ENCODE measurements at regions of chr9 and their contacts with region 1.

Region 1: DNA sequence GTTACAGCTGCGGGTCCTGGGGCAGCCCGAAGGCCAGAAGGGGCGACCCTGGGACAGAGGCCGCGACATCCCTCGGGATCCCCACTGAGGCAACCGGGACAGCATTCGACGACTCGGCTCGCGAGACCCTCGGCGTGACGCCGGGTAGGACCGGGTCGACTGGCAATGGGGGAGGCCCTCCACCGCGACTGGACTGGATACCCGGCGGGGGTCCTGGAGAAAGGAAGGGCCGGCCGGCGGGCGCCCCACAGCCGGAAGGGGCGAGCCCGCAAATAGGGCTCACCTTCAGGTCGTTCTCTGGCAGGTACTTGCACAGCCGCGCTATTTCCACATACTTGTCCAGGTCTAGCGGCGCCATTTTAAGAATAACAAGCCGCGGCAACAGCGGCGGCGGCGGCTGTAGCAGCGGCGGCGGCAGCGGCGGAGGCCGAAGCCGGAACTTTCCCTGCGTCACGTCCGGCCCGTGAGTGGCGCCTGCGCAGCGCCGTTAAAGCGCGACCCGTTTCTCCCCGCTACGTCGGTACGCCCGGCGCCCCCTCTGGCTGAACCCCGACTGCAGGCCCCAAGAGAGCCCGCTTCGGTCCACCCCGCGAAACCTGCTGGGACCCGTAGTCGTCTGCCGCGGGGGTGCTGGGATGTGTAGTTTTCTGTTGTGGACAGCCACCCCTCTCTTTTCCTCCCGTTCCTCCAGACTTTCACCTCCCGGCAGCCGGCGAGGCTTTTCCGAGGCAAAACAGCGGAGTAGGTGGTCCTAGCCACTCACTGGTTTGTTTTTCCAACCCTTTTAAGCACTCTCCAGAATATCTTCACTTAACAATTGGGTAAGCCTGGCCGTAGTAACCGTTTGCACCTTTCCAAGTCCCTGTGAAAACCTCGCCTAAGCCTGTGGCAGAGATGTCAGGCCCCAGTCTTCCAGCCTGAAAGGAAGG is at the start of gene PPP6C:
- DNase-seq: peak; percentile 99
- H3K4me3 Mint-ChIP-seq: peak within 1 kb of the TSS; percentile 97
- H3K27ac Mint-ChIP-seq: peak within 1 kb of the TSS; percentile 97
- H3K4me1 Mint-ChIP-seq: peaks cover 64% of the 10 kb centered on the region
- H3K27me3 Mint-ChIP-seq: no peaks in the 10 kb centered on the region
- total RNA-seq, gene PPP6C: 43.6 to 46.3 TPM

Region 2: DNA sequence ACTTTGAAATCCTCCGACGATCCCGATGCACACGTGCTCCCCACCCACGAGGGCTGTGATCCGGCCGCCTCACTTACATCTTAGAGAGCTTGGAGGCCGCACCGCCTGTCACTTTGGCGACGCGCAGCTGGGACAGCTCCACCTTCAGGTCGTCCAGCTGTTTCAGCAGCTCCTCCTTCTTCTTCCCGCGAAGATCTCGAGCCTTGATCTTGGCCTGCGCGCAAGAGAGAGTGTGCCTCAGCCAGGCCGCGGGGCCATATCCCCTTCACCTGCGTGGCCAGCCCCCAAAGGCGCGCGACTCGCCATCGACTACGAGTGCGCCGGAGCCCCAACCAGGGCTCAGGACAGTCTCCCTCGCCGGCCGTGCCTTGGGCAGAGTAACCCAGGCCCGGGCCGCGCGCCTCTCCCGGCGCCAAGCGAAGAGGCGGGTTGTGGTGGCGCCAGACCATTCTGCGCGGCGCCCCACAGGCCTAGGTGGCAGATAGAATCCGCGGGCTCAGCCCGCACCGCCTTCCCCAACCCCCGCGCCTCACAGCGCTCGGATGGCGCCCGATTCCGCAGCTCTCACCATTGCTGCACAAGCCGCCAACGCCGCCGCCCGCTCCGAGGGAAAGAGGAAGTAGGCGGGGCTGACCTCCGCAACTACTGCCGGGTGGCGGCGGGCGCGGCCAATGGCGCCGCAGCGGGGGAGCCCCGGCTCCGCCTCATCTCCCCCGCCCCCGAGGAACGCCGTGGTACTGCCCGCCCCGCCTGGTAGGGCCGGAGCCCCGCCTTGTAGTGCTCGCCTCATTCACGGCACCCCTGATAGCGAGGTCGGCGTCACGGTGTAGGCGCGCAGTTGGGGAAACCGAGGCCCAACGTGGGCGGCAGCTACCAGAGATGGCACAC is 328.0 kb before region 1 on chr9 and contains the starts of genes ARPC5L and RPL35:
- CTCF ChIA-PET with region 1: interaction called, 5 read pairs
- intact Hi-C with region 1: loop called (anchors 2 kb)
- DNase-seq: peak; percentile 96
- H3K4me3 Mint-ChIP-seq: peak within 1 kb of the TSS; percentile 87
- H3K27ac Mint-ChIP-seq: peak within 1 kb of the TSS; percentile 95
- H3K4me1 Mint-ChIP-seq: peaks cover 46% of the 10 kb centered on the region
- H3K27me3 Mint-ChIP-seq: no peaks in the 10 kb centered on the region
- total RNA-seq, gene ARPC5L: 116 to 123 TPM
- total RNA-seq, gene RPL35: 2,701 to 2,729 TPM

Region 3: DNA sequence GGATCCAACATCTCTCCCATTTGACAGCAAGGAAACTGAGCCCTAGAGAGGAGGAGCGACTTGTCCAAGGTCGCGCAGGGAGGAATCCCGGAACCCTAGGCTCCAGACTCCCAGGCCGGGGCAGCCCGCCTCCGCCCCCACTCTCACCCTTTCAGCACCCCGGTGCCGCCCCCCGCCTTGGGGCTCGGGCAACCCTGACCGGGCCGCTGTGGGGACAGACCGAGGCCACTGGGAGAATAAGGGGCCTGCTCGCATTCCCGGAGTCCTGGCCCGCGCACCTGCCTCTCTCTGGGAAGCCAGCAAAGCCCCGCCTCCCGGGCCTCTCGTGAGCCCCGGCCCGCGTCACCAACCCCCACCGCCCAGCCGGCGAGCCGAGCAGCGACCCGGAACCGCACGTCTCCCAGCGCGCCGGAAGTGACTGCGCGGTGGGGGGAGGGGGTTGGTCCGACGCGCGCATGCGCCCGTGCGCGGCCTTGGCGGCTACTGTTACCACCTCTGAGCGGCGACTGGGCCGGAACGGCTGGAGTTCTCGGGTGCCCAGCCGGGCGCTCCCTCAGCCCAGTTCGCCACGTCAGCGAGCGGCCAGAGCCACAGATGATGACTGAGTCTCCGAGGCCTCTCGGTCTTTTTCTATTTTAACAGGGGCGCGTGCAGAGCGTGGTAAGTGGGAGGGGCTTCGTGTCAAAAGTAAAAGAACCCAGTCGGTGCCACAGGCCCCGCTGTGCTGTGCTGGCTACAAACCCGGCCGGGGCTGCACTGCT is 248.8 kb before region 1 on chr9 and contains the start of gene GOLGA1:
- CTCF ChIA-PET with region 1: no interaction called
- intact Hi-C with region 1: loop called (anchors 2 kb)
- DNase-seq: peak; percentile 93
- H3K4me3 Mint-ChIP-seq: peak within 1 kb of the TSS; percentile 98
- H3K27ac Mint-ChIP-seq: peak within 1 kb of the TSS; percentile 98
- H3K4me1 Mint-ChIP-seq: peaks cover 22% of the 10 kb centered on the region
- H3K27me3 Mint-ChIP-seq: no peaks in the 10 kb centered on the region
- total RNA-seq, gene GOLGA1: 14.3 to 15.8 TPM

Region 4: DNA sequence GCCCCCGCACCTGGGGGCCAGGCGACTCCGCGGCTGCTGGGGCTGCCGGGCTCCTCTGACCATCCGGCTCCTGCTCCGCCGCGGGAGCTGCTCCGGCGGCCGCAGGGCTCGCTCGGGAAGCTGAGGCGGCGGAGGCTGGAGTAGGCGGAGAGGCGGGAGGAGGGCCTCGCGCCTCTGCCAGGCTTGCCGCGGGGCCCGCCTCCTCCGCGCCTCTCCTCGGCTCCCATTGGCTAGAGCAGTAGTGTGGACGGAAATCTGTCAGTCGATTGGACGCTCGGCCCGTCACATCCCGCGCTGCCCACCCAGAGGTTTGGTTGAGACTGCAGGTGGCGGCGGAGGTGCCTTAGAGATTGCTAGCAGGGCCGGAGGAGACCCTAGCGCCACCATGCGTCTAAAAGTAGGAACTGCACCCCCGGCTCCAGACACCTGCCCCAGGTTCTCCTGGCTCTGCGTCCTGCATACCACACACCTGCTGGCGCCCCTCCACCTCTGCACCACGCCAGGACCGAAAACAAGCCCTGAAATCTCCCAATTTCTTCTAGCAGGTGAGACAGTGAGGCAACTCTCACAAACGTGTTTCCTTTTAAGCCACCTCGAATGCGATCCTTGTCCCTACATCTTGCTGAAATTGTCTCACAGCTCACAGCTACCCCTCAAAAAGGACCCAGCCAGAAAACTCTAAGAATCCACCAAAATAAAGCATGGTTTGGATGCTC is 46.1 kb before region 1 on chr9 and contains the start of gene SCAI:
- CTCF ChIA-PET with region 1: interaction called, 3 read pairs
- intact Hi-C with region 1: loop called (anchors 2 kb)
- DNase-seq: peak; percentile 100
- H3K4me3 Mint-ChIP-seq: peak within 1 kb of the TSS; percentile 82
- H3K27ac Mint-ChIP-seq: peak within 1 kb of the TSS; percentile 58
- H3K4me1 Mint-ChIP-seq: peaks cover 40% of the 10 kb centered on the region
- H3K27me3 Mint-ChIP-seq: no peaks in the 10 kb centered on the region
- total RNA-seq, gene SCAI: 9.6 to 11.8 TPM

Region 5: GRCh38 chr9:125241000-125241862 is 51.6 kb after region 1 on chr9 and contains the start of gene HSPA5:
- CTCF ChIA-PET with region 1: no interaction called
- intact Hi-C with region 1: loop called (anchors 1 kb)
- DNase-seq: peak; percentile 100
- H3K4me3 Mint-ChIP-seq: peak within 1 kb of the TSS; percentile 95
- H3K27ac Mint-ChIP-seq: peak within 1 kb of the TSS; percentile 99
- H3K4me1 Mint-ChIP-seq: peaks cover 44% of the 10 kb centered on the region
- H3K27me3 Mint-ChIP-seq: peaks cover 2% of the 10 kb centered on the region
- total RNA-seq, gene HSPA5: 136 to 138 TPM

Region 6: GRCh38 chr9:125706661-125707471 is 517.2 kb after region 1 on chr9 and contains the start of gene MAPKAP1:
- CTCF ChIA-PET with region 1: no interaction called
- intact Hi-C with region 1: loop called (anchors 10 kb)
- DNase-seq: peak; percentile 96
- H3K4me3 Mint-ChIP-seq: peak within 1 kb of the TSS; percentile 83
- H3K27ac Mint-ChIP-seq: peak within 1 kb of the TSS; percentile 87
- H3K4me1 Mint-ChIP-seq: peaks cover 38% of the 10 kb centered on the region
- H3K27me3 Mint-ChIP-seq: no peaks in the 10 kb centered on the region
- total RNA-seq, gene MAPKAP1: 54.8 to 57.4 TPM

Measured in activated naive CD4-positive, alpha-beta T cell treated with anti-CD3 and anti-CD28 coated beads for 36 hours (primary cell).